PC-3 (cell line): ENCODE measurements at regions of chr17 and their contacts with region 1.

Region 1: GRCh38 chr17:63621766-63622519 is at the start of gene MAP3K3:
- DNase-seq: peak; percentile 100
- ATAC-seq: peak; percentile 86
- H3K4me3 ChIP-seq: peak within 1 kb of the TSS; percentile 82
- H3K27ac ChIP-seq: peak within 1 kb of the TSS; percentile 11; the same call in 1 of the 2 replicates
- H3K4me1 ChIP-seq: peaks cover 26% of the 10 kb centered on the region
- H3K27me3 ChIP-seq: no peaks in the 10 kb centered on the region
- CTCF ChIP-seq: no peak; the same call in 1 of the 2 replicates
- total RNA-seq, gene MAP3K3: 27.1 and 36.1 TPM in 2 replicates

Region 2: DNA sequence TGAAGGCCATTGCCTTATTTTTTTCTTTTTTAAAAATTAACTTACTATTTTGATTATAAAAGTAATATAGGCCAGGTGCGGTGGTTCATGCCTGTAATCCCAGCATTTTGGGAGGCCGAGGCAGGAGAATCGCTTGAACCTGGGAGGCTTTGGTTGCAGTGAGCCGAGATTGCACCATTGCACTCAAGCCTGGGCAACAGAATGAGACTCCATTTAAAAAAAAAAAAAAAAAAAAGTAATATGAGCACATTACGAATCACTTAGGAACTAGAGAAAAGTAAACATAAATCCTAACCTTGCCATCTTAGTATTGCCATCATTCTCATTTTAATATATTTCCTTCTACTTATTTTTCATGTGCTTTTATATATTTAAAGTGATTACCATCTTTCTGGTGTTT is 34.2 kb before region 1 on chr17:
- CTCF ChIA-PET with region 1: no interaction called
- POLR2A ChIA-PET with region 1: no interaction called
- intact Hi-C with region 1: no loop called
- DNase-seq: peak; percentile 46
- ATAC-seq: peak; percentile 82
- H3K4me3 ChIP-seq: no peak overlapping the region
- H3K27ac ChIP-seq: 0 out of 2 replicates have a peak overlapping the region, but pooled peaks have one; percentile 17
- H3K4me1 ChIP-seq: peaks cover 23% of the 10 kb centered on the region
- H3K27me3 ChIP-seq: no peaks in the 10 kb centered on the region
- CTCF ChIP-seq: no peak

Region 3: DNA sequence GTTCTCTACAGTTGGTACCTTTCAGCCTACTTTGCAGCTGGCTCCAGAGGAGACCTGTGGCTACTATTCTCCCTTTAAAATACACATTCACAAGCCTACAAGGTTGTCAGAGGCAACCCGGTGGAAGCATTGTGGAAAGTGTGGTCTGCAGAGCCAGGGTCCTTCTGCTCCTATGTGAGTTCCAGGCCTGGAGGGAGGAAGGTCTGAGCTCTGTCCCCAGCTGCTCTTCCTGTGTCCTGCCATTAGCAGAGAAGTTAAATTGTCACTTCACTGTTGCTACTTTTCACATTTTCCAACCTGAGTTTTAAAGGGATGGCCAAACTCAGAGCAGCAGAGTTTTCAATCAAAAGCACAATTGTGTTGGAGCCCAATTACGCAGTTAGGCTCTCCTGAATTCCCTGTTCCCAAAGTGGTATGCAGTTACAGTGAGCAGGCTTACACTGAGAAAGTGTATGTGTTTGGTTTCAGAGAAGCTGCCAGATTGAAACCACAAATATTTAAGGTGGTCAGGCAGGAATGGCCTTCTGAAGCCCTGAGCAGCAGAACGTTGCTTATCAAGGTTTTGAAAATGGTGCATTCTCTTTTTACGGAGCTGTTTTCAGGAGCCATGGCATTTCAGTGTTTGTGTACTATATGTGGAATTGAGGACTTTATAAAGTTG is 25.3 kb after region 1 on chr17:
- CTCF ChIA-PET with region 1: no interaction called
- POLR2A ChIA-PET with region 1: interaction called, 23 read pairs
- intact Hi-C with region 1: no loop called
- DNase-seq: peak; percentile 81
- ATAC-seq: peak; percentile 88
- H3K4me3 ChIP-seq: no peak overlapping the region
- H3K27ac ChIP-seq: 0 out of 2 replicates have a peak overlapping the region, but pooled peaks have one; percentile 0
- H3K4me1 ChIP-seq: peaks cover 14% of the 10 kb centered on the region
- H3K27me3 ChIP-seq: no peaks in the 10 kb centered on the region
- CTCF ChIP-seq: no peak

Region 4: GRCh38 chr17:63741221-63742049 is 119.5 kb after region 1 on chr17 and contains the start of gene STRADA:
- CTCF ChIA-PET with region 1: no interaction called
- POLR2A ChIA-PET with region 1: no interaction called
- intact Hi-C with region 1: loop called (anchors 5 kb)
- DNase-seq: peak; percentile 100
- ATAC-seq: peak; percentile 87
- H3K4me3 ChIP-seq: peak within 1 kb of the TSS; percentile 87
- H3K27ac ChIP-seq: peak within 1 kb of the TSS; percentile 66
- H3K4me1 ChIP-seq: peaks cover 15% of the 10 kb centered on the region; the same call in 1 of the 2 replicates
- H3K27me3 ChIP-seq: no peaks in the 10 kb centered on the region
- CTCF ChIP-seq: no peak
- total RNA-seq, gene STRADA: 17.9 and 26.3 TPM in 2 replicates